Psoas muscle (tissue), 8 donors: ENCODE measurements at regions of chr19 and their contacts with region 1.

Region 1: DNA sequence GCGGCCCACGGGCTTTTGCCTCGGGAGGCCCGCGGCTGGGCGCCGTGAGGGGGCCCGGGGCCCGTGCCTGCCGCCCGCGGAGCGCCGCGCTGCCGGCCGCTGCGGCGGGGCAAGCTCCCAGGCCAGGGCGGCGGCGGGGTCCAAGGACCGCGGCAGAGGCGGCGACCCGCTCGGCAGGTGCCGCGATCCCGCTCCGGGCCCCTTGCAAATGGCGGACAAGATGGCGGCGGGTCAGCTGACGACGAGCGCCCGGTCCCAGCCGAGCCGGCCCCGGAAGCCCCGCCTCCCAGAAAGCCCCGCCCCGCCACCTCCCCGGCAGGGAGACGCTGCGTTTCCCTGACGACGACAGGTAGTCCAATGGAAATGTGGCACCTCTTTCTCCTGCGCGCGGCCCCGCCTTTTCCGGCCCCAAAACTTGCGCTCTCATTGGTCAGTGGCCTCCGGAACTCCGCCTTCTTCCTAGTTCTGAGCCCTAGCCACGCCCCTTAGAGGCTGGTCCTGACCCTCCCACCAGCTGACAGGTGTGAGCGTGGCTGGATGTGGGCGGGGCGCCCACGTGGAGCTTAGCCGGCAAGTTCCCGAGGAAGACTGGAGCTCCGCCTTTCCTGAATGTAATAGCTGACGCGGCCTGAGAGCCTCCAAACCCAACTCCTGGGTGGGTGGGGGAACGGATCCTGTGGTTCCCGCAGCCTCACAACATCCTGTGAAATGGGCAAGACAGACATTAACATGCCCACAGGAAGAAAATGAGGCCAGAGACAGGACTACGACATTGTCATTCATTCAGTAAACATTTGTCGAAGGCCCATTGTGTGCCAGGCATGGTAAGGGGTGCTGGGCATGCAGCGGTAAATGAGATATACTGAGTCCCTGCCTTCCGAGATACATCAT is at the start of gene AP3D1:
- DNase-seq: peak; percentile 100
- ATAC-seq: peak; percentile 94 to 97 (median 96)
- H3K4me3 ChIP-seq: peak within 1 kb of the TSS; percentile 100
- H3K27ac ChIP-seq: peak within 1 kb of the TSS; percentile 96
- H3K4me1 ChIP-seq: peaks cover 37% of the 10 kb centered on the region
- H3K27me3 ChIP-seq: no peaks in the 10 kb centered on the region
- CTCF ChIP-seq: no peak
- total RNA-seq, gene AP3D1: 71.9 to 103 (median 91.4) TPM

Region 2: DNA sequence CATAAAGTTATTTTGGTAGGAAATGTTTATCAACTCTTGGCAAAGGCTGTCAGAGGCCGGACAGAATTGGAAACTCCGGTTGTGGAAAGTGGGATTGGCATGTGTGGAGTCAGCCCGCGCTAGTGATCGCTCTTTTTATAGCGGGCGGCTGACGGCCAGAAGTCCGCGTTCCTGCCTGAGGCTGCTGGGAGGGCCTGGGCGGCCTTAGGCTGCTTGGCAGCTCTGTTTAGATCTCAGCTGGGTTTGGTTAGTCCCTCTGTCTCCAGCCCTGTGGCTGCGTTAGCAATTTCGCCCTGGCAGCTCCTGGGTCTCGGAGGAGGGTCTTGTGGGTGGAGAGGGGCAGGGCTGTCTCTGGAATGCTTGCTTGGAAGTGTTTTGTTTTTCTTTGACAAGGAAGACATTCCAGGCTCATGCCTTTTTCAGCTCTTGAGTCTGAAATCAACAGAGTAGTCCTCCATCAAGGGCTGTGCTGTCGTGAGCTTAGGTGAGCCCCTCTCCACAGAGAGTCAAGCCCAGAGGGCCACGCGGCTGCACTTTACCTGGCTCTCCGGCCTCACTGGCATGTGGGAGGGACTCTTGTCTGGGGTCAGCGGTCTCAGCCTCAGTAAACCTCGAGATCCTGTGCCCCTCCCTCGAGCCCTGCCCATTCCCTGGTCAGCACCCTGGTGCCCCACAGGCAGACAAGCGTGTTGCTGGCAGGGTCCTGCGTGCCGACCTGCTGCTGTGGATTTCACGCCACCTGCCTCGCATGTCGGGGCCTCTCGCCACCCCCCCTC is 34.7 kb after region 1 on chr19:
- intact Hi-C with region 1: loop called in 1 of 2 experiments (anchors 5 kb)
- DNase-seq: peak; percentile 92 to 96
- ATAC-seq: peak; percentile 92 to 94 (median 93)
- H3K4me3 ChIP-seq: peak overlapping the region; percentile 33
- H3K27ac ChIP-seq: peak overlapping the region; percentile 85
- H3K4me1 ChIP-seq: peaks cover 59% of the 10 kb centered on the region
- H3K27me3 ChIP-seq: no peaks in the 10 kb centered on the region
- CTCF ChIP-seq: no peak

Region 3: DNA sequence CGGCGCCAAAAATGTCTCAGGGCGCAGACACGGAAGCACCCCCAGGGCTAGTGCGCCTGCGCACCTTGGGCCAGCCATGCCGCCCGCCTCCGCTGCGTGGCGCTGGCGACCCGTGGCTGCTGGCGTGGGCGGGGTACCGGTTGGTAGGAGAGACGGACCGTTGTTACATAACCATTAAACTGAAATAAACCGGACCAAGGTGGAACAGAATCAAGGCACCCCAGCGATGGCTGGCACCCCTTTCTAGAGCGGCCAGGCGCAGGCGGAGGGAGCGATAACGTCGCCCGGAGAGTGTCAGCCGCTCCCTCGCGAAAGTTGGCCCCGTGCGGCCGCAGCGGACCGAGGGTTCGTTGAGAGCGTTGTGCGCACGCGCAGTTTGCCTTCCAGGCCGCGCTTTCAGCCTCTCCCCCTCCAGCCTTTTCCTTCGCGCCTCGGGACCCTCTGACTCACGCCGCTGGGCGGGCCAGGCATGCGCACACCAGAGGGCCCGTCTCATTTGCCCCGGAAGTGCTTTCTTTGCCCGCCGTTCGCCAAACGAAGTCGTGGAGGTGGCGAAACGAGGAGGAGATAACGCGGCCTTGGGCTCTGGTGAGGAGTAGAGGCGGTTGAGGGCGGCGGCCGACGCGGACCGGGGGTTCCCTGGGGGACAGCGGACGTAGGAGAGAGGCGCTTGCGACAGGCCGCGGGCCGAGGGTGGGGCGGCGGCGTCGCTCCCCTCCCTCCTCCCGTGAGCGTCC is 84.9 kb after region 1 on chr19 and contains the starts of genes PLEKHJ1 and SF3A2:
- intact Hi-C with region 1: loop called (anchors 5 kb)
- DNase-seq: peak; percentile 97 to 99
- ATAC-seq: peak; percentile 88 to 90 (median 88)
- H3K4me3 ChIP-seq: peak within 1 kb of the TSS; percentile 97
- H3K27ac ChIP-seq: peak within 1 kb of the TSS; percentile 91
- H3K4me1 ChIP-seq: peaks cover 49% of the 10 kb centered on the region
- H3K27me3 ChIP-seq: no peaks in the 10 kb centered on the region
- CTCF ChIP-seq: peak; percentile 93
- total RNA-seq, gene PLEKHJ1: 54.9 to 65.5 (median 60.0) TPM
- total RNA-seq, gene SF3A2: 31.1 to 46.8 (median 40.2) TPM

Region 4: DNA sequence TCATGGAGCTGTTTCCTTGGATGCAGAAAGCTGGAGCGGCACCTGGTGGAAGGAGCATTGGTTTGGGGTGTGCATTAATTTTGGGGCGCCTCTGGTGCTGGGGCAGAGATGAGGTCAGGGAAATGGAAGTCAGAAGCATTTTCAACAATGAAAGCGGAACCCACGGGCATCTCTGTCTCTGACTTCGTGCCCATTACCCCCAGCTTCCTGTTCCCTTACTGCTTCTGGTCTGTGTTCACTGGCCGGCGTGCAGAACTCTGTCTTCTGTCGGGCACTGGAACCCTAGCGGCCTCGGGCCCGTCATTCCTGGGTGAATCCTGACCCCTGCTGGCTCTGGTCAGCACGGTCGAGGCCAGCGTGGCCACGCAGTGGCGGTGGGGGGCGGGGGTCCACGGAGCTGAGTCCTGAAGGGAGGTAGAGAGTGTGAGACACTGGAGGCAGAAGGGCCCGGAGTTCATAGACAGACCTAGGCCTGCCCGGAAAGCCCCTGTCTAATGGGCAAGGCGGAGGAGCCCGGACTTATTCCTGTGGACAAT is 164.3 kb after region 1 on chr19:
- intact Hi-C with region 1: loop called in 1 of 2 experiments (anchors 5 kb)
- DNase-seq: peak; percentile 64 to 80
- ATAC-seq: peak; percentile 71 to 89 (median 81)
- H3K4me3 ChIP-seq: no peak overlapping the region
- H3K27ac ChIP-seq: no peak overlapping the region
- H3K4me1 ChIP-seq: no peaks in the 10 kb centered on the region
- H3K27me3 ChIP-seq: peaks cover 0 to 7% (median 0%) of the 10 kb centered on the region in 3 donors
- CTCF ChIP-seq: peak; percentile 45